CD4-positive, alpha-beta T cell (primary cell): ENCODE measurements at regions of chr2 and their contacts with region 1.

Region 1: DNA sequence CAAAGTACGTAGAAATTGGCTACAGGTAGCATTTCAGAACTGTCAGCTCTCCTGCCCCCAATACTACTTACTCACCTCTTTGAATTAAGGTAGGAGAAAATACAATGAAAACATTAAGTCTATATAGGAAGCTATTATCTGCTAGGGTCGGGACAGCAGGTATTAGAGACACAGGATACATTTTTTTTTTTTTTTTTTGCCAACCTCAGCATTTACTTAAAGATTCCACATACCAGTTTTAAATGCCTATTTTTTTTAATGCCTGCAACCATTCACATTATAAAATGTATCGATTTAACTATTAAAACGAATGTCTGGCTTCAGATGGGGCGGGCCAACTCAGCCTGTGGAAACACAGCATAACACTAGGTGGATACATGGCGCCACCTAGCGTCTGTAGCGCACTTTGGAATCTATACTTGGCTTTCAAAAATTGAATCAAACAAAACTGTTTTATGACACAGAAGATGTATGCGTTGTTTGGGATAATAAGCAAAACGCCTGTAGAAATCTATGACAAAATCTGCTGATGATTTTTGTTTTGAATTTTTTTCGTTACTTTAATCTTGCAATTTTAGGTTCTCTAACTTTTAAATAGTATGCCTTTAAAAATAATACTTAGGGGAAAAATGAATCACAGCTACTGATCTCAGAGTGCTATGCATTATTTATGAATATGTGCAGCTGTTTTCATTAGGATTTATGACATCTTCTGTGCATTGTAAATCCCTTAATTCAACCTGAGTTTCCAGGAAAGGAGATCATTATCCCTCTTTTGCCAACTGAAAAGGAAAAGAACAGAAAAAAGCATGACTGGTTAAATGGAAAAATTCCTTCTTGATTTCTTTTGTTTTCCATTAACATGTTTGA is 261.0 kb downstream of the NYAP2 start:
- DNase-seq: peak; percentile 59 to 81 (median 68)
- ATAC-seq: peak; percentile 71
- H3K4me3 ChIP-seq: no peak overlapping the region
- H3K4me3 Mint-ChIP-seq: no peak overlapping the region
- H3K27ac ChIP-seq: no peak overlapping the region
- H3K27ac Mint-ChIP-seq: no peak overlapping the region
- H3K4me1 ChIP-seq: no peaks in the 10 kb centered on the region
- H3K4me1 Mint-ChIP-seq: no peaks in the 10 kb centered on the region
- H3K27me3 ChIP-seq: no peaks in the 10 kb centered on the region
- H3K27me3 Mint-ChIP-seq: peaks cover 41% of the 10 kb centered on the region
- CTCF ChIP-seq: peak; percentile 94

Region 2: GRCh38 chr2:224357098-224357901 is 1303.2 kb before region 1 on chr2:
- CTCF ChIA-PET with region 1: interaction called, 3 read pairs
- POLR2A ChIA-PET with region 1: no interaction called
- intact Hi-C with region 1: loop called in 1 of 2 experiments (anchors 5 kb)
- DNase-seq: peak; percentile 6 to 81 (median 42)
- ATAC-seq: peak; percentile 83
- H3K4me3 ChIP-seq: no peak overlapping the region
- H3K4me3 Mint-ChIP-seq: no peak overlapping the region
- H3K27ac ChIP-seq: no peak overlapping the region
- H3K27ac Mint-ChIP-seq: no peak overlapping the region
- H3K4me1 ChIP-seq: no peaks in the 10 kb centered on the region
- H3K4me1 Mint-ChIP-seq: no peaks in the 10 kb centered on the region
- H3K27me3 ChIP-seq: no peaks in the 10 kb centered on the region
- H3K27me3 Mint-ChIP-seq: peaks cover 12% of the 10 kb centered on the region
- CTCF ChIP-seq: peak; percentile 93

Region 3: GRCh38 chr2:224778474-224778877 is 882.0 kb before region 1 on chr2:
- CTCF ChIA-PET with region 1: interaction called, 3 read pairs
- POLR2A ChIA-PET with region 1: no interaction called
- intact Hi-C with region 1: loop called in 1 of 2 experiments (anchors 5 kb)
- DNase-seq: peak; percentile 23 to 75 (median 50)
- ATAC-seq: peak; percentile 78
- H3K4me3 ChIP-seq: no peak overlapping the region
- H3K4me3 Mint-ChIP-seq: no peak overlapping the region
- H3K27ac ChIP-seq: no peak overlapping the region
- H3K27ac Mint-ChIP-seq: peak overlapping the region; percentile 59
- H3K4me1 ChIP-seq: no peaks in the 10 kb centered on the region
- H3K4me1 Mint-ChIP-seq: peaks cover 8% of the 10 kb centered on the region
- H3K27me3 ChIP-seq: no peaks in the 10 kb centered on the region
- H3K27me3 Mint-ChIP-seq: no peaks in the 10 kb centered on the region
- CTCF ChIP-seq: peak; percentile 97

Region 4: GRCh38 chr2:225002039-225002655 is 658.4 kb before region 1 on chr2:
- CTCF ChIA-PET with region 1: no interaction called
- POLR2A ChIA-PET with region 1: no interaction called
- intact Hi-C with region 1: loop called in 1 of 2 experiments (anchors 5 kb)
- DNase-seq: peak; percentile 24 to 88 (median 52)
- ATAC-seq: peak; percentile 88
- H3K4me3 ChIP-seq: no peak overlapping the region
- H3K4me3 Mint-ChIP-seq: no peak overlapping the region
- H3K27ac ChIP-seq: no peak overlapping the region
- H3K27ac Mint-ChIP-seq: peak overlapping the region; percentile 83
- H3K4me1 ChIP-seq: peaks cover 44% of the 10 kb centered on the region
- H3K4me1 Mint-ChIP-seq: peaks cover 87% of the 10 kb centered on the region
- H3K27me3 ChIP-seq: no peaks in the 10 kb centered on the region
- H3K27me3 Mint-ChIP-seq: no peaks in the 10 kb centered on the region
- CTCF ChIP-seq: peak; percentile 74

Region 5: GRCh38 chr2:225122583-225123486 is 537.7 kb before region 1 on chr2:
- CTCF ChIA-PET with region 1: interaction called, 3 read pairs
- POLR2A ChIA-PET with region 1: no interaction called
- intact Hi-C with region 1: loop called in 1 of 2 experiments (anchors 2 kb)
- DNase-seq: peak in 7 of 14 experiments; percentile 7 to 43 (median 33)
- ATAC-seq: no peak
- H3K4me3 ChIP-seq: no peak overlapping the region
- H3K4me3 Mint-ChIP-seq: no peak overlapping the region
- H3K27ac ChIP-seq: no peak overlapping the region
- H3K27ac Mint-ChIP-seq: no peak overlapping the region
- H3K4me1 ChIP-seq: no peaks in the 10 kb centered on the region
- H3K4me1 Mint-ChIP-seq: peaks cover 5% of the 10 kb centered on the region
- H3K27me3 ChIP-seq: no peaks in the 10 kb centered on the region
- H3K27me3 Mint-ChIP-seq: no peaks in the 10 kb centered on the region
- CTCF ChIP-seq: peak; percentile 70

Region 6: GRCh38 chr2:225282858-225283710 is 377.4 kb before region 1 on chr2:
- CTCF ChIA-PET with region 1: no interaction called
- POLR2A ChIA-PET with region 1: no interaction called
- intact Hi-C with region 1: loop called in 1 of 2 experiments (anchors 5 kb)
- DNase-seq: peak in 6 of 14 experiments; percentile 2 to 51 (median 30)
- ATAC-seq: peak; percentile 43
- H3K4me3 ChIP-seq: no peak overlapping the region
- H3K4me3 Mint-ChIP-seq: no peak overlapping the region
- H3K27ac ChIP-seq: no peak overlapping the region
- H3K27ac Mint-ChIP-seq: no peak overlapping the region
- H3K4me1 ChIP-seq: no peaks in the 10 kb centered on the region
- H3K4me1 Mint-ChIP-seq: no peaks in the 10 kb centered on the region
- H3K27me3 ChIP-seq: no peaks in the 10 kb centered on the region
- H3K27me3 Mint-ChIP-seq: no peaks in the 10 kb centered on the region
- CTCF ChIP-seq: peak; percentile 82

Region 7: DNA sequence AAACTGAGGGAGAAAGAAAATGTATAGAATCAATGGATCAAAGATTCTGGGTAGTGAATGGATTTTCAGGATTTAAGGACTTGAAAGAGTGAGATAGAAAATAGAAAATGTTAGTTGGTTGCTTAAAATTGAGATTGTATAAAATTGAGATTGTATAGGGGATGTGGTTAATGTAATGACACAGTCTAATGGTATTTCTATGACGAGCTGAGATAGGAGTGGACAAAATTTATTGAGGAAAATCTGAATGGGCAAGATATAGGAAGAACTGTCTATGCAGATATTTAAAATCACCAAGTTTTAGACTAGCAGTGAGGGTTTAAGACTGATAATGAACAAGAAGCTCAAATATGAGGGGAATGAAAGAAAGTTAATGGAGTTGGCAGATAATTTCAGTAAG is 145.6 kb after region 1 on chr2:
- CTCF ChIA-PET with region 1: no interaction called
- POLR2A ChIA-PET with region 1: no interaction called
- intact Hi-C with region 1: no loop called
- DNase-seq: no peak
- ATAC-seq: no peak
- H3K4me3 ChIP-seq: no peak overlapping the region
- H3K4me3 Mint-ChIP-seq: no peak overlapping the region
- H3K27ac ChIP-seq: no peak overlapping the region
- H3K27ac Mint-ChIP-seq: no peak overlapping the region
- H3K4me1 ChIP-seq: no peaks in the 10 kb centered on the region
- H3K4me1 Mint-ChIP-seq: no peaks in the 10 kb centered on the region
- H3K27me3 ChIP-seq: no peaks in the 10 kb centered on the region
- H3K27me3 Mint-ChIP-seq: peaks cover 5% of the 10 kb centered on the region
- CTCF ChIP-seq: no peak